Upper lobe of right lung (tissue), 1 donor: ENCODE measurements at regions of chr14 and their contacts with region 1.

Region 1: GRCh38 chr14:30005114-30005808 is 77.6 kb upstream of the PRKD1 start:
- DNase-seq: no peak
- ATAC-seq: peak; percentile 82
- H3K4me3 ChIP-seq: no peak overlapping the region
- H3K27ac ChIP-seq: no peak overlapping the region
- H3K4me1 ChIP-seq: no peaks in the 10 kb centered on the region
- H3K27me3 ChIP-seq: no peaks in the 10 kb centered on the region
- CTCF ChIP-seq: peak; percentile 74

Region 2: GRCh38 chr14:29548948-29549370 is 456.3 kb before region 1 on chr14:
- intact Hi-C with region 1: loop called (anchors 10 kb)
- DNase-seq: no peak
- ATAC-seq: peak; percentile 77
- H3K4me3 ChIP-seq: no peak overlapping the region
- H3K27ac ChIP-seq: no peak overlapping the region
- H3K4me1 ChIP-seq: no peaks in the 10 kb centered on the region
- H3K27me3 ChIP-seq: no peaks in the 10 kb centered on the region
- CTCF ChIP-seq: peak; percentile 60